Colonic mucosa (tissue), 4 donors: ENCODE measurements at regions of chr16 and their contacts with region 1.

Region 1: GRCh38 chr16:22188595-22189442 is 17.3 kb upstream of the EEF2K start:
- DNase-seq: peak; percentile 85
- H3K4me3 ChIP-seq: no peak overlapping the region
- H3K27ac ChIP-seq: peak overlapping the region; percentile 97
- H3K4me1 ChIP-seq: peaks cover 12% of the 10 kb centered on the region
- H3K27me3 ChIP-seq: no peaks in the 10 kb centered on the region
- CTCF ChIP-seq: peak; percentile 78

Region 2: GRCh38 chr16:21952793-21953540 is 235.9 kb before region 1 on chr16 and contains the start of gene UQCRC2:
- intact Hi-C with region 1: loop called (anchors 5 kb)
- DNase-seq: peak; percentile 93
- H3K4me3 ChIP-seq: peak within 1 kb of the TSS; percentile 72
- H3K27ac ChIP-seq: peak within 1 kb of the TSS; percentile 91
- H3K4me1 ChIP-seq: peaks cover 11% of the 10 kb centered on the region
- H3K27me3 ChIP-seq: no peaks in the 10 kb centered on the region
- CTCF ChIP-seq: no peak
- total RNA-seq, gene UQCRC2: 477 to 641 TPM

Region 3: DNA sequence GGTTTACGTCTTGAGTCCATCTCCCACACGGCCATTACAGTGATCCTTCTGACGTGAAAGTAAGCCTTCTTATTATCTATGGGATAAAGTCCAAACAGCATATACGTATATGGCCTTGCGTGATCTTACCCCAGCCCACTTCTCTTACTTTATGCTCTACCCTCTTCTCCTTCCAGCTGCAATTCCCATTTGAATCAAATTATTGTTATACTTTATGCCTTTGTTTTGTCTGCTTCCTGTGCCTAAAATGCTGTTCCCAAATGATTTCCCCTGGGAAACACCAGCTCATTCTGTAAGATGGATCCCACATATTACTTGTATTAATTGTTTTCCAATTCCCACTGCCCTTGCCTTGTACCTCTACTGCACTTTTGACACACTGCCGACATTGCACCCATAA is 224.5 kb before region 1 on chr16:
- intact Hi-C with region 1: no loop called
- DNase-seq: no peak
- H3K4me3 ChIP-seq: no peak overlapping the region
- H3K27ac ChIP-seq: no peak overlapping the region
- H3K4me1 ChIP-seq: no peaks in the 10 kb centered on the region
- H3K27me3 ChIP-seq: no peaks in the 10 kb centered on the region
- CTCF ChIP-seq: no peak

Region 4: GRCh38 chr16:22001591-22001990 is 187.2 kb before region 1 on chr16:
- intact Hi-C with region 1: loop called (anchors 2 kb)
- DNase-seq: no peak
- H3K4me3 ChIP-seq: no peak overlapping the region
- H3K27ac ChIP-seq: no peak overlapping the region
- H3K4me1 ChIP-seq: peaks cover 3% of the 10 kb centered on the region
- H3K27me3 ChIP-seq: no peaks in the 10 kb centered on the region
- CTCF ChIP-seq: no peak

Region 5: DNA sequence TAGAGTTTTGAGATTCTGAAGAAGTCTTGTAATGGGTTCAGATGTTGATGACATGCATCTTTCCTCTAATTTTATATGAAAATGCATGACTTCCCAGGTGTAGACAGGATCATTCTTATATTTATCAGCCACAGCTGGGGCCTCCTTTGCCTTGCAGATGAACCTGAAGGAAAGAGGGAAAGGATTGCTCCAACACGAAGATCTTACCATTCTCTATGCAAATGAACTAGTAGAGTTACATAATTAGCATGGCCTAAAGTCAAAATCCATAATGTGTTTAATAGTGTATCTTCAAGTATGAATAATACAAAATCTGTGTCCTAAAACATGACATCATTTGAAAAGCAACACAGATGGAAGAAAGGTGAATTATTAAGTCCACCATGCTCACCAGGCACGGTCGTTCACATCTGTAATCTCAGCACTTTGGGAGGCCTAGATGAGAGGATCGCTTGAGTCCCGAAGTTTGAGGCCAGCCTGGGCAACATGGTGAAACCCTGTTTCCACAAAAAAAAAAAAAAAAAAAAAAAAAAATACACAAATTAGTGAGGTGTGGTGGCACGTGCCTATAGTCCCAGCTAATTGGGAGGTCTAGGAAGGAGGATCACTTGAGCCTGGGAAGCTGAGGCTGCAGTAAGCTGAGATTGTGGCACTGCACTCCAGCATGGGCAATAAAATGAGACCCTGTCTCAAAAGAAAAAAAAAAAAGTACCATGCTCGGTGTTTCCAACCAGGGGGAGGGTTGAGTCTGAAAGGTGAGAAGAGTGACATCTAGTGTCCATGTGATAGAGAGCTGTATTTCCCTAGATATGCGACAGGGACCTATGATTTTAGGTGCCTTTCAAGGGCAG is 90.2 kb before region 1 on chr16:
- intact Hi-C with region 1: loop called (anchors 5 kb)
- DNase-seq: no peak
- H3K4me3 ChIP-seq: no peak overlapping the region
- H3K27ac ChIP-seq: no peak overlapping the region
- H3K4me1 ChIP-seq: no peaks in the 10 kb centered on the region
- H3K27me3 ChIP-seq: no peaks in the 10 kb centered on the region
- CTCF ChIP-seq: peak; percentile 43

Region 6: GRCh38 chr16:22151246-22151998 is 37.4 kb before region 1 on chr16:
- intact Hi-C with region 1: no loop called
- DNase-seq: no peak
- H3K4me3 ChIP-seq: no peak overlapping the region
- H3K27ac ChIP-seq: no peak overlapping the region
- H3K4me1 ChIP-seq: no peaks in the 10 kb centered on the region
- H3K27me3 ChIP-seq: no peaks in the 10 kb centered on the region
- CTCF ChIP-seq: no peak